ENCODE measurements at regions of chr1 and their contacts with region 1.

Region 1: DNA sequence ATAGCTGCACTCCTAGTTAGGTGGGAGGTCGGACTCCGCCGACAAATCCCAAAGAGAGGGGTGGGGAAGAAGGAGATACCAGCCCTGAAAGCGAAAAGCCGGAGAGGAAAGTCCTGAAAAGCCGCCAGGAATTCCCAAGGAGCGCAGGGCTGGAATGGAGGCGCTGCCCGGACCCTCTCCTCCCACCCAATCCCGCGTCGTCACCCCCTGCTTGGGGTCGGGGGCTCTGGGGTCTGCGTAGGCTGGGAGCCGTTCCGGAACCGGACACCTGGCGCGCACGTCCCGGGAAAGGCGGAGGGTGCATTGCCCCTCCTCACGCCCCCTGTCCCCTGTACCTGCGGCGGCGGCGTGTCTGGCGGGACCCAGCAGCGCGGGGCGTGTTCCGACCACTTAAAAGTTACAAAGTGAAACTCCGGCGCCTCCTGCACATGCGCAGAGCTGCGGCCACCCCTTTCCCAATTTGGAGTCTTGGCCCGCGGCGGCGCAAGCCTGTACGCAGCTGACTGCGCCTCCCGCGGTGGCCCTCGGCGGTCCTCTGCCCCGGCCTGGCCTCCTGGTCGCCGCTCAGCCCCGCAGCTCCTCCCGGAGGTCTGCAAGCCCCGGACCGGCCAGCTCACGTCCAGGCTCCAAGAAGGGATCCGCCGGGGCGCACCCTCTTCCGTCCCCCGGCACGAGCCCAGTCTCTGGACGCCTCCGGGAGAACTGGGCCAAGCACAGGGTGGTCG is at the start of gene TMEM63A:
- DNase-seq: peak; percentile 96
- CTCF ChIP-seq: peak; percentile 34

Region 2: GRCh38 chr1:225567590-225568194 is 314.4 kb before region 1 on chr1:
- CTCF ChIA-PET with region 1: no interaction called
- POLR2A ChIA-PET with region 1: no interaction called
- DNase-seq: no peak
- CTCF ChIP-seq: no peak

Region 3: GRCh38 chr1:225871359-225872074 is 10.6 kb before region 1 on chr1:
- CTCF ChIA-PET with region 1: interaction called, 13 read pairs
- POLR2A ChIA-PET with region 1: no interaction called
- DNase-seq: no peak
- CTCF ChIP-seq: no peak

Region 4: GRCh38 chr1:225896937-225897549 is 14.9 kb after region 1 on chr1:
- CTCF ChIA-PET with region 1: interaction called, 25 read pairs
- POLR2A ChIA-PET with region 1: no interaction called
- DNase-seq: peak; percentile 93
- CTCF ChIP-seq: no peak

Measured in GM10248 (cell line).